ENCODE measurements at regions of chr6 and their contacts with region 1.

Region 1: DNA sequence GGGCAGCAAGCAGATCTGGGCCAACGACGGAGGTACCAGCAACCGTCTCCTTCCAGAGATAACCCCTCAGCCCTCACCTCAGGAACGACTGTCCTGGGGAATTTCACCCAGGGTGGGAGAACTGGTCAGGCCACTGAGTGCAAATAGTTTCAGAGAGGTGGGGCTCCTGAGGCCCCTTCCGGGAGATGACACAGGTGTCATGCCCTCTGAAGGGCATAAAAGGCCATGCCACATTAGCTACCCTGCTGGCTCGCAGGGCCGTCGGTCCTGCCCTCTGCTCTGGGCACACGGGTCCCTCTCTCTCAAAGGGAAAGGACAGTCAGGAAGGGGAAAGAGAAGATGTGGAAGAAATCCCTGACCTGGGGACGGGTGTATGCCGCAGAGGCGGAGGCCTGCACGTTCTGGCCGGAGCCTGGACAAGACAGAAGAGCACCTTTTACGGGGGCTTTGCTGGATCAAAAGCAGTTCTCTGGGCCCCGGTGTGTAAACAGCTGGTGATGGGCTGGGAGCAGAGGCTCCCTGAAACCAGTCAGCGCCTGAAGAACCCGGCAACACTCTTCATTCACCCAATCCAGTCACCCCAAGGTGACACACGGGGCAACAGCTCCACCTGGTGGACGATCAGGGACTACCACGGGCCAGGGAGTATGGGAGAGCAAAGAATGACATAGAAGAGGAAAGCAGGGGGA is 6.4 kb upstream of the TAF8 start:
- DNase-seq: peak; percentile 85

Region 2: DNA sequence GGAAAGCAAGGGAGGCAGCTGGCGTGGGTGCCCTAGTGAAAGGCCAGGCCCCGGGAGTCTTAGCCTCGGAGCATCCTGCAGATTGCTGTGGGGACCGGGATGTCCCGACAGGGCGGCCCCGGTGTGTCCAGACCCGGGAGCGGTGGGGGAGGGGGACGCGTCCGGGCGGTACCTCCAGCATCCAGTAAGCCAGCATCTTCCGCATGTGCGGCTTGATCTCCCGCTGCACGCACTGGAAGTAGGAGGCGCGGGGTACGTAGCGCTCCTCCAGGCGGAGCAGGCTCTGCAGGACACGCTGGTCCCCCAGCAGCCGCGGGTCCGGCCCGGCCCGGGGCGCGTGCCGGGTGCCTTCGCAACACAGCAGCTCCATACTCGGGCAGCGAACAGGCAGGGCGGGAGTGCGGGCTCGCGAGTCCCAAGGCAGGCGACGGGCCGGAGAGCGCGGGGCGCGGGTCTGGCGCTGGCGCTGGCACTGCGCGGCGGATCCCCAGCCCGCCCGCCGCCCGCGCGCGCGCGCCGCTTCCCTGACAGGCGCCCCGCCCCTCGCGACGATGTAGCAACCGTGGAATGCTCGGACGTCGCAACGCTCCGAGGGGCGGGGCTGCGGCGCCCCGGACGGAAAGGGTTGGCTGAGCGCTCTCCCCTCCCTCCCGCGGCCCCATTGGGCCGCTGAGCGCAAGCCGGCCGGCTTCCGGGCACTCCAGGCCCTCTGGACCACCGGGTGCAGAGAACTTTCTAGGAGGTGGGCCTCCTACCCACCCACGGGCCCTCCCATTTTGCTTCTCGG is 102.5 kb before region 1 on chr6 and contains the start of gene CCND3:
- in situ Hi-C with region 1: loop called (anchors 25 kb)
- DNase-seq: peak; percentile 99
- total RNA-seq, gene CCND3: 209 and 278 TPM in 2 replicates

Measured in Caki2 (cell line).